Head of caudate nucleus (tissue), 42 donors: ENCODE measurements at regions of chr11 and their contacts with region 1.

Region 1: DNA sequence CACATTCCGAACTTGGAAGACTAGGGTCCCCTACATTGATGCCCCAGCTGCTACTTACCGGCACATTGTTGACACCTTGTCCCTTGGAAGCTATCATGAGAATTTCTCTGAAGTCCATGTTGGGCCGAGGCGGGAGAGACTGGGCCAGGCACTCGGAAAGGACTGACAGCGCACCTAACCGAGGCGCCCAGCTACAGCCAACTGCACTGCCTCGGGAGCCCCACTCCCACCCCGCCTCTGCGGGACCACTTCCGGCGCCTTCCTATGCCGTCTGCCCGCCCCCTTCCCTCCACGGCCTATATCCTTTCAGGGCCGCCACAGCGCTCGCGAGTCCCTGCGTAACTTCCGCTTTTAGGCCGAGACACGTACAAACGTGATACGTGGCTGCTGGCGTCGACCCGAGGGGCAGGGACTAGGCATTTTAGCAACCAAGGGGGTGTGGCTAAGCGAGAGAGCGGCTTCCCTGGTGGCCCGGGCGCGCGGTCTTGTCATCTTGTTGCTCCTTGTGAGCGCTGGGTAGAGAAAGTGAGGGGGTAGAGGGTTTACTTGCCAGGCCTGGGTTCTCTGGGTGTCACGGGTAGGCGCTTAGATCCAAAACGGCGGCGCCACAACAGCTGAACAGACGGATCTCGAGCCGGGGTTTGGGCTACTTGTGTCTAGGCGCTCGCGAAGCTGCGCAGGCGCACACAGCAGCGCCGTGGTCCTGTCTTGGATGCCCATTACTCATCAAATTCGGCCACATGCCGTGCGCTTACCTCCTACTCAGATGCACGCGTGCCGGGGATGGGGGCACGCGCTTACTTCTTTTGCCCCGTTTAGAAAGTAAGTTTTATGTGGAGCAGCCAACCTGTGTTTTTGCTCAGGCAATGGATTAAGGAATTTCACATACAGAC is at the start of gene SPTY2D1:
- DNase-seq: peak; percentile 98 to 100 (median 99)

Region 2: GRCh38 chr11:18479063-18479462 is 155.3 kb before region 1 on chr11:
- intact Hi-C with region 1: no loop called
- DNase-seq: no peak

Region 3: DNA sequence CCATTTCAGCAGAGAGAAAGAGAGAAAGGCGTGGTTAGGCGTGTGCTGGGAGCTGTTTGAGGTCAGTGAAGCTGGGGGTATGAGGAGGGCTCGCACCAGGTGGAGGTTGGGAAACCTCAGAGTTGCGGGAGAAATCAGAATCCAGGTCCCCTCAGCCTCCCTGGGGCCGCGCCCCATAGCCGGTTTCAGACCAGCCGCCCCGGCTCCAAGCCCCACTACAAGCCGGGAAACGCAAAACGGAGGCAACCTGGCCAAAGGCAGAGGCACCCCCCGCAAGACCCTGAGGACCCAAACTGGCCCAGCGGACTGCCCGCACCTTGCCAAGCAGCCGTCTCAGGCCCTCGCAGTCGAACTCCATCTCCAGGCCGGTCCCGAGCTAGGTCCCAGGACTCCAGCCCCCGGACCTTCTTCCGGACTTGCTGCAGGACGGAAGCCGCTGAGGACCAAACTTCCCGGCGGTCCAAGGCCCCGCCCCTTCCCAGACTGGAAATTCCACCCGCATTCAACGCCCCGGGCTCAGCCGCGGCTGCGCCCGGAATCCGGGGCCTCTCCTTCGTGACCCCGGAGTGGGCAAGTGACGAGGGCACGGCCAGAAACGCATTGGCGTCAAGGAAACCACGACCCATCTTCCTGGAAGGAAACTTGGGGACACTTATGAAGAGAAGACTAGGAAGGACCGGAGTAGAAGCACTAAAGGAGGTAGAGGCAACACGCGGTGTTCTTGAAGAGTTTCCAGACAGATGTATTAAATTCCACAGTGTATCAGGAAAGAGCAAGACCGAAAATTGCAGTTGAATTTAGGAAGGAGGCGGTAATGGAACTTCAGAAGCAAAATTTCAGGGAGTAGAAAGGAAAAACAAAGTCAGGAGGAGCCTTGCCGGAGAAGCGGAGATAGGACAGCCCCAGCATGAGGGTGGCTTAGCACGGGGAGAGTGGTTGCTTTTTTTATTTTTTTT is 45.8 kb before region 1 on chr11 and contains the start of gene UEVLD:
- intact Hi-C with region 1: loop called (anchors 5 kb)
- DNase-seq: peak; percentile 71 to 96 (median 90)

Region 4: GRCh38 chr11:18698341-18699268 is 64.2 kb after region 1 on chr11 and contains the start of gene TMEM86A:
- intact Hi-C with region 1: loop called (anchors 5 kb)
- DNase-seq: peak; percentile 89 to 98 (median 96)